Pancreas (tissue), 10 donors: ENCODE measurements at regions of chr12 and their contacts with region 1.

Region 1: DNA sequence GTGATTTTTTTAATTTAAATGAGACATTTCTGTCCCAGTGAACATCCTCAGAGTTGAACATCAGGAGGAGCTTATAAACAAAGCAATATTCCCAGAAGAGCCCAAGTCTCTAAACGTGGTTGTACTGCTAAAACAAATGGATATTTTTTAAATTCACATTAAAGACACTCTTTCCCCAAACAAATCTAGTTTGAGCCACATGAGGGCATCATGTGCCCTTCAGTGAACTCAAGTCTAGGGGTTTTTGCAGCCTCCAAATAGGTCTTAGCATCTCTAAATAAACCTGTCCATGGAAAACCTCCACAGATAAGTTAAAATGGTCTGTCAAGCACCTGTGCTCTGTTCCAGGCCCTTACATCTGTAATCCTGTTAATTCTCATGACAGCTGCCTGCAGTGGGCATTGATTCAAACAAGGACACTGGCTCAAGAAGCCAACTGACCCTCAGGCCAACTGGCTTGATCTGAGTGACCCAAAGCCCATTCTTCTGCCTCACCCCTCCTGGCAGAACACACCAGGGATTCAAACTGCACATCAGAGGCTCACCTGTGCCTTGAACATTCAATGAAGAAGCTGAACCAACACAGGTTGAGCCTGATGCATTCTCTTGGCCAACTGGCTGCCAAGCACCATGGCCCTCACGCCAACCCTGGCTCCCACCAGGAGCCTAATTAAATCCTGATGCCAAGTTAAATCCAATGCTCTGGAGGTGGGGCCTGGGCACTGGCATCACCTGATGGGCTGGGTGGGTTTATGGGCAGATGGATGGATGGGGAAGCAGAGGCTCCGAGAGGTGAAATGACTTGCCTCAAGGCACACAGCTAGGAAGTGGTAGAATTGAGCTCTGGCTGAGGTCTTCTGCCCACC is 8.6 kb downstream of the ISCU start:
- DNase-seq: no peak
- ATAC-seq: no peak
- H3K4me3 ChIP-seq: no peak overlapping the region
- H3K27ac ChIP-seq: no peak overlapping the region
- H3K4me1 ChIP-seq: peaks cover 0 to 7% (median 7%) of the 10 kb centered on the region in 3 donors
- H3K27me3 ChIP-seq: no peaks in the 10 kb centered on the region
- CTCF ChIP-seq: no peak

Region 2: GRCh38 chr12:108430245-108430644 is 140.7 kb before region 1 on chr12:
- intact Hi-C with region 1: no loop called
- DNase-seq: no peak
- ATAC-seq: no peak
- H3K4me3 ChIP-seq: no peak overlapping the region
- H3K27ac ChIP-seq: no peak overlapping the region
- H3K4me1 ChIP-seq: no peaks in the 10 kb centered on the region
- H3K27me3 ChIP-seq: no peaks in the 10 kb centered on the region
- CTCF ChIP-seq: no peak

Region 3: GRCh38 chr12:108611884-108612415 is 41.0 kb after region 1 on chr12:
- intact Hi-C with region 1: loop called in 2 of 3 experiments (anchors 5 kb)
- DNase-seq: no peak
- ATAC-seq: peak in 2 of 4 donors; percentile 11 to 37
- H3K4me3 ChIP-seq: no peak overlapping the region
- H3K27ac ChIP-seq: no peak overlapping the region
- H3K4me1 ChIP-seq: no peaks in the 10 kb centered on the region
- H3K27me3 ChIP-seq: no peaks in the 10 kb centered on the region
- CTCF ChIP-seq: peak in 1 of 4 donors; percentile 22

Region 4: GRCh38 chr12:108618079-108618952 is 47.3 kb after region 1 on chr12:
- intact Hi-C with region 1: loop called in 2 of 3 experiments (anchors 5 kb)
- DNase-seq: peak in 5 of 6 donors; percentile 54 to 94 (median 79)
- ATAC-seq: peak; percentile 89 to 95 (median 92)
- H3K4me3 ChIP-seq: no peak overlapping the region
- H3K27ac ChIP-seq: no peak overlapping the region
- H3K4me1 ChIP-seq: no peaks in the 10 kb centered on the region
- H3K27me3 ChIP-seq: no peaks in the 10 kb centered on the region
- CTCF ChIP-seq: peak; percentile 89 to 96 (median 94)